ENCODE measurements at regions of chr17 and their contacts with region 1.

Region 1: GRCh38 chr17:9886141-9886930 is 18.7 kb downstream of the RCVRN start:
- DNase-seq: no peak
- ATAC-seq: no peak
- H3K4me3 ChIP-seq: no peak overlapping the region
- H3K27ac ChIP-seq: no peak overlapping the region
- H3K4me1 ChIP-seq: no peaks in the 10 kb centered on the region; the same call in 1 of the 2 replicates
- H3K27me3 ChIP-seq: no peaks in the 10 kb centered on the region
- CTCF ChIP-seq: no peak

Region 2: GRCh38 chr17:9244066-9245052 is 642.0 kb before region 1 on chr17:
- CTCF ChIA-PET with region 1: no interaction called
- POLR2A ChIA-PET with region 1: no interaction called
- intact Hi-C with region 1: no loop called
- DNase-seq: no peak
- ATAC-seq: no peak
- H3K4me3 ChIP-seq: no peak overlapping the region
- H3K27ac ChIP-seq: no peak overlapping the region
- H3K4me1 ChIP-seq: peaks cover 7% of the 10 kb centered on the region; the same call in 1 of the 2 replicates
- H3K27me3 ChIP-seq: no peaks in the 10 kb centered on the region
- CTCF ChIP-seq: no peak

Region 3: DNA sequence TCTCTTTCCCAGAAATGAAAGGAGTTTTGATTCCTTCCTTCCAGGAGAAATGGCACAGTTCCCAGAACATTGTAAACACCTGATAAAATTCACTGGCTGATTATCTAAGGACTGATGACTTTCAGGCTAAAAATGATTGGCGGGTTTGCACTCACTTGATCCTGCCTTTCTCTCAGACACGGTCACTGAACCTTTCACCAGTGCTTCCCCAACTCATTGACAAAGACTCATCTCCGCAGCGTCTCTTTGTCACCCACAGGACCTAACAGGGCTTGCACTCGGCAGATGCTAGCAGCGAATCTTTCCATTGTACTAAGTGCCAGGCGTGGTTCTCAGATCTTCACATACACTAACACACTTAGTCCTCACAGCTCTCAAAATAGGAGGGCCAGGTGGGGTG is 87.6 kb before region 1 on chr17:
- CTCF ChIA-PET with region 1: no interaction called
- POLR2A ChIA-PET with region 1: no interaction called
- intact Hi-C with region 1: loop called (anchors 5 kb)
- DNase-seq: peak; percentile 8
- ATAC-seq: no peak
- H3K4me3 ChIP-seq: no peak overlapping the region
- H3K27ac ChIP-seq: no peak overlapping the region
- H3K4me1 ChIP-seq: peaks cover 11% of the 10 kb centered on the region
- H3K27me3 ChIP-seq: no peaks in the 10 kb centered on the region
- CTCF ChIP-seq: no peak

Measured in PC-3 (cell line).